ENCODE measurements at regions of chr2 and their contacts with region 1.

Region 1: DNA sequence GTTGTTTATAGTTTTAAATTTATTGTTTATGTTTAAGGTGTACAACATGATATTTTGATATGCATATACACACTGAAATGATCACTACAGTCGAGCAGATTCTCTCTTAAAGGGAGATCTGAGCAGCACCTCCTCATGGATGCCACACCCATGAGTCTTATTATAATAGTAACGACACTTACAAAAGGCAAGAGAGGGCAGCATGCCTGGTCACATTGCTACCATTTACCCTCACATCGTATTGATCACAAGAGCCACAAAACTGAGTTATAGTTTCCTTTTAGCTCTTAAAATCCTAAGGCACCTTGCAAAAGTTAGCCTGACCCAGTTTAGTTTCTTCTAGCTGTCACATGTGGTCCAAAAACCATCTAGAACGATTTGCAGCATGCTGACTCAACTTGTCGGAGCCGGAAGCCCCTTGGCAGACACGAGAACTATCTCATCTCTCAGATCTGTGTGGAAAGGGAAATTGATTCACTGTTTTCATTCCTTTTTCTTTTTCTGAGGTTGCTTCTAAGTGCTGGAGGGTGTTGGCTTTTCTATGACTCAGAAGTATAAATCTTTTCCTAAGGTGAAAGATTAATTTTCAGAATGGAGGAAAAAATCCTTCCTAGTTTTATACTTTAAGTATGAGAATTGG is 85.3 kb downstream of the CDC42EP3 start:
- DNase-seq: peak; percentile 62
- H3K4me3 Mint-ChIP-seq: peak overlapping the region; percentile 56
- H3K27ac Mint-ChIP-seq: peak overlapping the region; percentile 50
- H3K4me1 Mint-ChIP-seq: peaks cover 71% of the 10 kb centered on the region
- H3K27me3 Mint-ChIP-seq: peaks cover 2% of the 10 kb centered on the region

Region 2: GRCh38 chr2:37376421-37377186 is 209.5 kb before region 1 on chr2:
- intact Hi-C with region 1: loop called (anchors 1 kb)
- DNase-seq: peak; percentile 29
- H3K4me3 Mint-ChIP-seq: peak overlapping the region; percentile 34
- H3K27ac Mint-ChIP-seq: peak overlapping the region; percentile 88
- H3K4me1 Mint-ChIP-seq: peaks cover 51% of the 10 kb centered on the region
- H3K27me3 Mint-ChIP-seq: peaks cover 51% of the 10 kb centered on the region

Region 3: GRCh38 chr2:37569986-37570679 is 16.0 kb before region 1 on chr2:
- intact Hi-C with region 1: loop called (anchors 2 kb)
- DNase-seq: no peak
- H3K4me3 Mint-ChIP-seq: no peak overlapping the region
- H3K27ac Mint-ChIP-seq: no peak overlapping the region
- H3K4me1 Mint-ChIP-seq: peaks cover 14% of the 10 kb centered on the region
- H3K27me3 Mint-ChIP-seq: peaks cover 9% of the 10 kb centered on the region

Region 4: DNA sequence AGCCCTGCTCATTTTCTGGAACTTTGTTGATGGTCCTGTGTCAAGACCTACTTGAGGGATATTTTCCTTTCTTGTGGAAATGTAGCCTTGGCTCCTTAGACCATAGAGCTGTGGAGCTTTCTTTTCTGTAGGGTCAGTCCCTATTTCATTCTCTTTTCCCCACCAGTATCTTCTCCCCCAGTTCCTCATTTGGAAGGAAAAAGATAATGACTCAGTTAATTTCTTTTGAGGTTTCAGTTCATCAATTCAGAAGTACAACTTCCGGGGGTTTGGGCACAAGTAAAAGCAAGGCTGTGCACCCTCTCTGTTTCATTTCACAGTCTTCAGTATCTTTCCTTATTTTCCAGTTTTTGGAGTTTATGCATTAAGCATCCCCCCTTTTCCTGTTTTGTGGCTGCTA is 14.6 kb after region 1 on chr2:
- intact Hi-C with region 1: loop called (anchors 1 kb)
- DNase-seq: no peak
- H3K4me3 Mint-ChIP-seq: peak overlapping the region; percentile 34
- H3K27ac Mint-ChIP-seq: no peak overlapping the region
- H3K4me1 Mint-ChIP-seq: peaks cover 45% of the 10 kb centered on the region
- H3K27me3 Mint-ChIP-seq: peaks cover 14% of the 10 kb centered on the region

Region 5: GRCh38 chr2:37615804-37616676 is 29.9 kb after region 1 on chr2:
- intact Hi-C with region 1: loop called (anchors 2 kb)
- DNase-seq: peak; percentile 34
- H3K4me3 Mint-ChIP-seq: no peak overlapping the region
- H3K27ac Mint-ChIP-seq: peak overlapping the region; percentile 1
- H3K4me1 Mint-ChIP-seq: peaks cover 30% of the 10 kb centered on the region
- H3K27me3 Mint-ChIP-seq: peaks cover 2% of the 10 kb centered on the region

Region 6: DNA sequence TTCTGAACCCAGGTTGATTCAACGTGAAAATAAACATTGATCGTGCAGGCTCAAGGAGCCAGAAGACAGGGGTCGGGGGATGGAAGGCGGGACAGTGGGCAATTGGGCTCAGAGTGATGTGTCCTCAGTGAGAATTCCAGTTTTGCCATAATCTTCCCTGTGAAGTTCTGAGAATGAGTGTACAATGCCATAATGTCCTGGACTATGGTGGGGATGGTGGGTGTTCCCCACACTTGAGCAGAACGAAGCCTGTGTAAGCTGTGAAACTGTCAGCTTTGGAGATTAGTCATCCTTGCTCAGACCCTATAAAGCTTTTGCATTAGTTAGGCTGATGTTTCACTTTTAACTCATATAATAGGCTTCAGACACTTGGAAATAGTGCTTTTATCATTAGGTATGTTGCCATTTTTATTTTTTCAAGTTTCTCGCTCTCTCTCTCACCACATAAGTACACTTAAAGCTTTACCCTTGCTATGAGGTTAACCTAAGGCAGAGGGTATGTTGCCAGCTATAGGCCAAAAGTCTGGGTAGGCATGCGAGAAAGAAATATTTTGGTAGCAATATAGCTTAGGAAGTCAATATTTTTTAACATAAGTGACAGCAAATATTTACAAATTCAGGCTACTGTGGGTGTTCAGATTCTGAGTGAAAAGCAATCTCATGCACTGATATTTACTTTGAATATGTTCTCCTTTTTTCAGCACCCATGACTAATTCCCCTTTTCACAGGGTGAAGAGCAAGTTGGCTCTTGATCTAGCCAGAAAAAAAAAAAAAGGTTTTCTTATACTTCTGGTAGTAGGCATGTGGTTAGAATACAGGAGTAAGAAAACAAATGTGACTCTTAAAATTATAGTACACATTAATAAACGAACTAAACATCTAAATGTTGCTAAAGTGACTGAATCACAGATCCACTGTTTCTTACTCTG is 38.1 kb after region 1 on chr2:
- intact Hi-C with region 1: loop called (anchors 1 kb)
- DNase-seq: no peak
- H3K4me3 Mint-ChIP-seq: peak overlapping the region; percentile 32
- H3K27ac Mint-ChIP-seq: peak overlapping the region; percentile 50
- H3K4me1 Mint-ChIP-seq: peaks cover 41% of the 10 kb centered on the region
- H3K27me3 Mint-ChIP-seq: no peaks in the 10 kb centered on the region

Measured in activated T-helper 1 cell treated with anti-CD3 and anti-CD28 coated beads, Interleukin-12 subunit alpha, Interleukin-12 subunit beta, Interleukin-2, Interleukin-4 antibody, amounts not matched to agents 30 ng/mL and 10 ng/mL and 1 ng/mL, durations not matched to agents 14 hours and 24 hours and 36 hours (primary cell).